ENCODE measurements at regions of chr3 and their contacts with region 1.

Region 1: GRCh38 chr3:160498202-160498601 is 48.6 kb upstream of the TRIM59 start:
- DNase-seq: no peak
- ATAC-seq: no peak
- H3K4me3 Mint-ChIP-seq: no peak overlapping the region
- H3K27ac Mint-ChIP-seq: no peak overlapping the region
- H3K4me1 Mint-ChIP-seq: no peaks in the 10 kb centered on the region
- H3K27me3 Mint-ChIP-seq: no peaks in the 10 kb centered on the region
- CTCF ChIP-seq: no peak

Region 2: GRCh38 chr3:160038862-160039562 is 459.2 kb before region 1 on chr3:
- CTCF ChIA-PET with region 1: no interaction called
- POLR2A ChIA-PET with region 1: no interaction called
- intact Hi-C with region 1: loop called (anchors 10 kb)
- DNase-seq: peak; percentile 38
- ATAC-seq: peak; percentile 42
- H3K4me3 Mint-ChIP-seq: no peak overlapping the region
- H3K27ac Mint-ChIP-seq: no peak overlapping the region
- H3K4me1 Mint-ChIP-seq: no peaks in the 10 kb centered on the region
- H3K27me3 Mint-ChIP-seq: peaks cover 31% of the 10 kb centered on the region
- CTCF ChIP-seq: no peak

Region 3: GRCh38 chr3:160399125-160400029 is 98.8 kb before region 1 on chr3 and contains the starts of genes IFT80 and SMC4:
- CTCF ChIA-PET with region 1: no interaction called
- POLR2A ChIA-PET with region 1: no interaction called
- intact Hi-C with region 1: no loop called
- DNase-seq: peak; percentile 97
- ATAC-seq: peak; percentile 97
- H3K4me3 Mint-ChIP-seq: peak within 1 kb of the TSS; percentile 95
- H3K27ac Mint-ChIP-seq: peak within 1 kb of the TSS; percentile 99
- H3K4me1 Mint-ChIP-seq: peaks cover 22% of the 10 kb centered on the region
- H3K27me3 Mint-ChIP-seq: peaks cover 6% of the 10 kb centered on the region
- CTCF ChIP-seq: no peak
- total RNA-seq, gene IFT80: 9.2 to 10.4 TPM
- total RNA-seq, gene SMC4: 149 to 154 TPM

Measured in activated CD8-positive, alpha-beta T cell treated with anti-CD3 and anti-CD28 coated beads for 36 hours (primary cell).